Activated naive CD4-positive, alpha-beta T cell treated with anti-CD3 and anti-CD28 coated beads for 36 hours (primary cell): ENCODE measurements at regions of chr3 and their contacts with region 1.

Region 1: DNA sequence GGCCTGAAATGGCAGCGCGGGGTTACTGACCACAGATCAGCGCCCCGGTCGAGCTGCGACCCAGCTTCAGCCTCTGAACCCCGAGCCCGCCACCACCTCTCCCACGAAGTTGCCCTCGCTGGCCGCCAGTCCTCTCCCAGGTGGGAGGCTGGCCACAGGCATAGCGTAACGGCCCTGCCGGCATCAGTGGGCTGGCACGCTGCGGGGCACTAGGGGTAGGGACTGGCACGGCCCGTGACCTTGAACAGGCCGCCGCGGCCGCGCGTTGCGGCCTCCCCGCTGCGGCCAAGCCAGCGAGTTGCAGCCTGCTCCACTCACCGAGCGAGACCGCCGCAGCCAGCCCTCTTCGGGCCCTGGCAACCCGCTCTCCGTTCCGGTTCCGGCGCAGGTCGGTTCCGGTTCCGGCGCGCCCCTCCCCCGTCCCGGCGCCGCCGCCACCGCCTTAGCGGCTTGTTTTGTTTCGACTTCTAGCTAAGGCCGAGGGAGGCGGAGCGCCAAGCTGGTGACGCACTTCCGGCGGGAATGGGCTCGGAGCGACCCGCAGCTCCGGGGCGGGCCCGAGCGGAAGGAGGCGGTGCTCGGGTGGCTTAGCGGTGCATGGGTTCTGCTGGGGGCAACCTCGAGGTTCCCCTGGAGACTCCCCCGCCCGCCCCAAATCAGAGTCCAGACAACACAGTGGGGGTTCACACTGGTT is at the start of gene USP19:
- DNase-seq: peak; percentile 96
- H3K4me3 Mint-ChIP-seq: peak within 1 kb of the TSS; percentile 86
- H3K27ac Mint-ChIP-seq: peak within 1 kb of the TSS; percentile 84
- H3K4me1 Mint-ChIP-seq: peaks cover 20% of the 10 kb centered on the region
- H3K27me3 Mint-ChIP-seq: no peaks in the 10 kb centered on the region
- total RNA-seq, gene USP19: 44.3 to 46.5 TPM

Region 2: GRCh38 chr3:48694610-48695392 is 425.8 kb before region 1 on chr3:
- CTCF ChIA-PET with region 1: no interaction called
- intact Hi-C with region 1: no loop called
- DNase-seq: no peak
- H3K4me3 Mint-ChIP-seq: no peak overlapping the region
- H3K27ac Mint-ChIP-seq: no peak overlapping the region
- H3K4me1 Mint-ChIP-seq: peaks cover 17% of the 10 kb centered on the region
- H3K27me3 Mint-ChIP-seq: no peaks in the 10 kb centered on the region

Region 3: DNA sequence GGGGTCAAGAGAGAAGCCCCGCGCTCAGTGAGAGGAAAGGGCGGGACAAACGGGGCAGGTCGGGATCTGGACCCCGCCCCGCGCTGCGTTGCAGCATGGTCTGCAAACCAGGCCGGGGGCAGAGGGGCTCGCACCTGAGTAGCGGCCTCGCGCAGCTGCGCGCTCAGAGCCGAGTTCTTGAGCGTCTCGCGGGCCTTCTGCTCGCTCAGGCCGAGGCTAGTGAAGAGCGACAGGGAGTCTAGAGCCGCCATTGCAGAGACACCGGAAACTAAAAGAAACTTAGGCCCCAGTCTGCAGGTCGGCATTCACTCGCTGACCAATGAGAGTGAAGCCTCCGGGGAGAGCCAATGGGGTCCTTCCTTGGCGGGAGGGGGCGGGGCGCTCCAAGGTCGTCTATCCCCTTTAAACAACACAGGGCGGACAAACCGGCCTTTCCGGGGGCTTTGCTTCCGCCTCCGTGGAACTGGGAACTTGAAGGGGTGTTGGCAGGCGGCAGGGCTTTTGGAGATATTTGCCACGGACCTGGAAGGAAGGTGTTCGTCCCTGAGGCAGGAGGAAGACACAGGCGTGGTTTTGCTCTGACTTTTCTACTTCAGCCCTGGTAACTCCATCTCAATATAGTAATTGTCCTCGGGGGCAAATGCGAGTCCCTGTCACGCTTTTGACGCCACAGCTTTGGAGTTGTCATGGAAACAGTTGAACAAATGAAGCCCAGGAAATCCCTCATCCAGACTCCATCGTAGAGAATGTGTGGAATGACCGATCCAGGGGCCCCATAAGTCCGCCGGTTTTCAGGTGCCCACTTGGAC is 15.9 kb before region 1 on chr3 and contains the start of gene QARS1:
- CTCF ChIA-PET with region 1: no interaction called
- intact Hi-C with region 1: loop called (anchors 1 kb)
- DNase-seq: peak; percentile 94
- H3K4me3 Mint-ChIP-seq: peak within 1 kb of the TSS; percentile 97
- H3K27ac Mint-ChIP-seq: peak within 1 kb of the TSS; percentile 85
- H3K4me1 Mint-ChIP-seq: peaks cover 26% of the 10 kb centered on the region
- H3K27me3 Mint-ChIP-seq: no peaks in the 10 kb centered on the region
- total RNA-seq, gene QARS1: 265 to 281 TPM

Region 4: GRCh38 chr3:49165771-49166751 is 45.5 kb after region 1 on chr3 and contains the start of gene CCDC71:
- CTCF ChIA-PET with region 1: interaction called, 5 read pairs
- intact Hi-C with region 1: loop called (anchors 2 kb)
- DNase-seq: peak; percentile 85
- H3K4me3 Mint-ChIP-seq: peak within 1 kb of the TSS; percentile 87
- H3K27ac Mint-ChIP-seq: peak within 1 kb of the TSS; percentile 83
- H3K4me1 Mint-ChIP-seq: peaks cover 30% of the 10 kb centered on the region
- H3K27me3 Mint-ChIP-seq: no peaks in the 10 kb centered on the region
- total RNA-seq, gene CCDC71: 11.8 to 12.8 TPM

Region 5: DNA sequence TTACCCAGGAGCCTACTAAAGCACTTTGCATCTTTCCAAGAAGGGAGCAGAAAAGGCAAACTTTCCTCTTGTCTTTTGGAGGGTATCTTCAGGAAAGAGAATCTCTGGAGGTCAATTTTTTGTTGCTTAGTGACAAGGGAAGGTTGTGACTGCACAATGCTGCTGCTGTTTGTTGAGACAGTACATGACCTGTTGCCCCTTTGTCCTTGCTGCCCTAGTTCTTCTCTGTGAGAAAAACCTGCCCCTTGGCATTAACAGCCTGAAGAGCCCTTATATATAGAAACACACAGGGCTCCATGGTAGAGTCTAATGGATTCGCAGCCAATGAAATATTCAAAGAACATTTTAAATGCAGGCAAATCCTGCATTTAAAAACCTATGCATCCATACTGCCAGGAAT is 71.2 kb after region 1 on chr3:
- CTCF ChIA-PET with region 1: no interaction called
- intact Hi-C with region 1: no loop called
- DNase-seq: no peak
- H3K4me3 Mint-ChIP-seq: no peak overlapping the region
- H3K27ac Mint-ChIP-seq: no peak overlapping the region
- H3K4me1 Mint-ChIP-seq: no peaks in the 10 kb centered on the region
- H3K27me3 Mint-ChIP-seq: no peaks in the 10 kb centered on the region

Region 6: DNA sequence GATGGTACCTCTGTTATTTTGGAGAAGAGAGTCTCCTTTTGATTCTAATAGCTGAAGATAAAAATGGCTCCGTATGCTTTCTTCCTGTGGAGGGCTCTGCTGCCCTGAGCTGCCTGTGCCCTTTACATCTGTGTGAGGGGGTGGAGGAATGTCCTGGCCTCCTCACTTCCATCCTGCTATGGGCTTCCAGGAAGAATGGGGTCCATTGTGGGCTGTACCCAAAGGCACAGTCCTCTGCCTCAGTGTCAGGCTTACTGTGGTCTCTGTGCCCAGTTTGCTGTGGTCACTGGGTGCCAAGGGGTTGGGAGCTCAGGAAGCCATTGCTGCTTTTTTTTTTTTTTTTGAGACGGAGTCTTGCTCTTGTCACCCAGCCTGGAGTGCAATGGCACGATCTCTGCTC is 363.9 kb after region 1 on chr3:
- CTCF ChIA-PET with region 1: no interaction called
- intact Hi-C with region 1: no loop called
- DNase-seq: no peak
- H3K4me3 Mint-ChIP-seq: no peak overlapping the region
- H3K27ac Mint-ChIP-seq: no peak overlapping the region
- H3K4me1 Mint-ChIP-seq: no peaks in the 10 kb centered on the region
- H3K27me3 Mint-ChIP-seq: no peaks in the 10 kb centered on the region